ENCODE measurements at regions of chr18 and their contacts with region 1.

Region 1: DNA sequence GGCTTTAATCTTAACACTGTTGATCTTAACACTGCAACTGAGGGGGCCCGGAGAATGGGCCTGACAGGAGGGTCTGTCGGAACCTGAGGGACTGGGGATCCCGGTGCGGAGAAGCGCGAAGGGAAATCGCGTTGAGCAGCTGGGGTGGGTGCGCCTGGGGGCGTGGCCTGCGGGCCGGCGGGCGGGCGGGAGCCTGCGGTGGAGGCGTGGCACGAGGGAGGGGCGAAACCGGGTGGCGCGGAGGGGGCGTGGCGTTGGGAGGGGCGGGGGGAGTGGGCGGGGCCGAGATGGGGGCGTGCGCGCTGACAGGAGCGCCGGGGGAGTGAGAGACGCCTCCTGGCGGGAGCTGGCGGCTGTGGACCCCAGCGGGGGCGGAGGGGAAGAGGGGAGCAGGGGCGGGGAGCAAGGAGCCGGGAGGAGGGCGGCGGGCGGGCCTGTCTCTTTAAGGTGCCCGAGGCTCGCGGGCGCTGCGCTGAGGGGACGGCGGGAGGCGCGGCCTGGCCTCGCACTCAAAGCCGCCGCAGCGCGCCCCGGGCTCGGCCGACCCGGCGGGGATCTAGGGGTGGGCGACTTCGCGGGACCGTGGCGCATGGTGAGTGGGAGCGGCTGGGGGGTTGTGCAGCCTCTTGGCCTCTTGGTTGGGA is at the start of gene TWSG1:
- DNase-seq: peak; percentile 97
- H3K4me3 Mint-ChIP-seq: peak within 1 kb of the TSS; percentile 83
- H3K27ac Mint-ChIP-seq: peak within 1 kb of the TSS; percentile 74
- H3K4me1 Mint-ChIP-seq: peaks cover 25% of the 10 kb centered on the region
- H3K27me3 Mint-ChIP-seq: peaks cover 29% of the 10 kb centered on the region
- total RNA-seq, gene TWSG1: 9.9 and 10.1 TPM in 2 replicates

Region 2: GRCh38 chr18:8704361-8705279 is 629.8 kb before region 1 on chr18:
- intact Hi-C with region 1: loop called (anchors 5 kb)
- DNase-seq: peak; percentile 96
- H3K4me3 Mint-ChIP-seq: peak overlapping the region; percentile 95
- H3K27ac Mint-ChIP-seq: peak overlapping the region; percentile 72
- H3K4me1 Mint-ChIP-seq: peaks cover 9% of the 10 kb centered on the region
- H3K27me3 Mint-ChIP-seq: peaks cover 69% of the 10 kb centered on the region

Region 3: DNA sequence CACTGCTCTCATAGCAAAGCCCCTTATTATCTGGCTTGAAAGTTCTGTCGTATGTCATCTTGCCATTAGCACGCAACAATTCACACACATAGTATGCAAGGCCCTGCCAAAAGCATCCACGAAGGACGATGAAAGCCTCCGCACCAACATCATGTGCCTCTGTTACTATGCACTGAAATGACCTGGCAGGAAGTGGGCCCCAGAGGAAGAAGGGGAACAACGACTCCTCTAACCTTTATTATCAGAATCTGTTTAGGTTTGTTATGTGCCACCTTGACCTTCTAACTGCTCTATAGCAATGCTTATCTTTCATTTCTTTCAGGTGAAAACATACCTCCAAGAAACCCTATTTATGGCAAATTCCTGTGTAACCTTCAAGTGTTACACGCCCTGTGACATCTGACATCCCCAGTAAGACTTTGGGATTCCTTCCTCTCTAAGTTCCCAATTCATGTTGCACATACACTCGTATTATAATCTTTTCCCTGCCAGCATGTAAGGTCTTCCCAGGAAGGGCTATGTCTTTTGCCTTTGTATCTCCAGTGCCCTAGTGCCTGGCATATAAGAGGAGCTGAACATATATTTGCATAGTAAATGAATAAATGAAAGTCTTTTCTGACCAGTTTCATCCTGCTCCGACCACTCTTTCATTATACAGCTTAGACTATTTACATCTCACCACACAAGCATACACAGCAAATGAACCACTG is 239.0 kb before region 1 on chr18:
- intact Hi-C with region 1: loop called (anchors 5 kb)
- DNase-seq: peak; percentile 89
- H3K4me3 Mint-ChIP-seq: peak overlapping the region; percentile 77
- H3K27ac Mint-ChIP-seq: peak overlapping the region; percentile 98
- H3K4me1 Mint-ChIP-seq: peaks cover 67% of the 10 kb centered on the region
- H3K27me3 Mint-ChIP-seq: no peaks in the 10 kb centered on the region

Region 4: DNA sequence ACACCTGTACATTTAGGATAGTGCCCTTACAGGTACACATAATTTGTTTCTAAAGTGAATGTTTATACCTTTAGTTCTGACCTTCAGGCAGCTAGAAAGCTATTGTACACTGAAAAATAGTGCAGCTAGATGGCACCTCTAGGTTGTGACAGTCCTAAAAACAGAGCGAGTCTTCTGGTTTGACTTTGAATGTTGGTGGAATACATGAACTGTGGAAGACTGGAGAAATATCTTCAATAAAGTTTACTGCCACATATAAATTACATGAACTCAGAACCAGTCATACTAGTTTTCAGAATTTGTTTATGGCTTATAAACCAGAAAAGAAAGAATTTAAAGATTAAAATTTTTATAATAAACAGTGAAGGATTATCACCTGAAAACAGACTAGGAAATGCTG is 58.6 kb before region 1 on chr18:
- intact Hi-C with region 1: loop called (anchors 10 kb)
- DNase-seq: peak; percentile 40
- H3K4me3 Mint-ChIP-seq: no peak overlapping the region
- H3K27ac Mint-ChIP-seq: no peak overlapping the region
- H3K4me1 Mint-ChIP-seq: no peaks in the 10 kb centered on the region
- H3K27me3 Mint-ChIP-seq: no peaks in the 10 kb centered on the region

Region 5: DNA sequence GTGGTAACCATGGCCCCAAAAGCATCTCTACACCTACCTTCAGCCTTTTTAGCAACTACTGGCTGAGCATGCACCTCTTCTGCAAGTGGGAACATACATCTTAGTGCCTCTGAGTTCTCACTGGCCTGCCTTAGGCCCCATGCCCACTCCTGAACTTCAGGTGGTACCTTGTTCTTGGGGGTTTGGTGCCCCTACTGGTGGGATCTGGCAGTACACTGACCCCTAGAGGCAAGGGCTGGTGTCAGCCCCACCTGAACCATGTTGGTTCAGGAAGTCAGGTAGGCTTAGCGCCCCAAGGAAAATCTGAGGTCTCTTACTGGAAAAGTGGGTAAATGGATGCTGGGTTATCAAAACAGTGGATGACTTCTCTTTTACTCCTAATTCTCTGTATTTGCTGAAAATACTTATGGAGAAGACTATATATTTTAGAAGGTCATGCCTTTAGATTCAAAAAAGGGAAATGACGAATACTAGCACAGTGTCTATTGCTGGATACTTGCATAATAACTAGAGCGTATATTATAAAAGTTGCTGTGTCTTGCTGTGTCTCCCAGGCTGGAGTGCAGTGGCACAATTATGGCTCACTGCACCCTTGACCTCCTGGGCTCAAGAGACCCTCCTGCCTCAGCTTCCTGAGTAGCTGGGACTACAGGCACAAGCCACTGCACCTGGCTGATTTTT is 458.3 kb after region 1 on chr18:
- intact Hi-C with region 1: no loop called
- DNase-seq: peak; percentile 68
- H3K4me3 Mint-ChIP-seq: no peak overlapping the region
- H3K27ac Mint-ChIP-seq: no peak overlapping the region
- H3K4me1 Mint-ChIP-seq: no peaks in the 10 kb centered on the region
- H3K27me3 Mint-ChIP-seq: peaks cover 9% of the 10 kb centered on the region